Tibial artery (tissue), 4 donors: ENCODE measurements at regions of chr16 and their contacts with region 1.

Region 1: GRCh38 chr16:1194665-1195392 is 30.2 kb downstream of the TPSG1 start:
- DNase-seq: no peak
- H3K4me3 ChIP-seq: no peak overlapping the region
- H3K27ac ChIP-seq: peak overlapping the region in 1 of 2 donors; percentile 18
- H3K4me1 ChIP-seq: peaks cover 0 to 39% (median 29%) of the 10 kb centered on the region in 4 donors
- H3K27me3 ChIP-seq: no peaks in the 10 kb centered on the region
- CTCF ChIP-seq: peak; percentile 83 to 86

Region 2: DNA sequence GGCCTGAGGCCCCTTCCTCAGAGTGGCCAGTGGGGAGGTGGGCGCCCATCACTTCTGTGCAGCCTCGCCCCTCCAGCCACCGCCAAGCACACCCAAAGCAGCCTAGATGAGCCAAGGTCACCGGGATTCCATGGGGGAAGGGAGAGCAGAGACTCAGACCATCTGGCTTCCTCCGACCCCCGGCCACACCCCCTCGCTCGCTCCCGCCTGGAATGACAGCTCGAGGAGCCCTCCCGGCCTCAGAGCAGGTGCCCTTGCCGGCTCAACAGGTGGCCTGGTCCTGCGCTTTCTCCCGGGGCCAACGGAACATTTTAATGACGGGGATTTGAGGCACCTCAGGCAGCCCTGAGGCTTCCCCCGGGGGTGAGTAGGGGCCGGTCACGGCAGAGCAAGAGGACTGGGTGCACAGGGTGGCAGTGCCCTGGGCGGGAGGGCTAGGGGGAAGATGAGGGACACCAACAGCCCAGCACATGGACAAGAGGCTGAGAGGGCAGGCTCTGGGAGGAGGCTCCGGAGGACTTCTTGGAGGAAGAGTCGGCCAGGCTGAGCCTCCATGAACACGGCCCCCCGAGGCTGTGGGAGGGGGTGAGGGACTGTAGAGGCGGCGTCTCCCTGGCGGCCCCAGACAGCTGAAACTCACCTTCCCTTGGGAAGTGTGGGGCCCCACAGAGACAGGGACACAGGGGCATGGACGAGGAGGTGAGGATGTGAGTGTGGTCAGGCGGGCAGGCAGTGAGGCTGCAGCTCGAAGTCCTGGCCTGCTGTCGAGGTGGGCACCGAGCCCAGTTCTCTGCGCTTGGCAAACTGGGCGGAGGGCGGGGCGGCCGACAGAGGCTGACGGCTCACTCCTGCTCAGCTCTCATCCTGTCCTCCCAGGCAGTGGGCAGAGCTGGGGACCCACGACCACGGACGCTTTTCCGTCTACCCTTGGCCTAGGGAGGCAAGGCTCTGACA is 86.3 kb before region 1 on chr16:
- intact Hi-C with region 1: loop called (anchors 2 kb)
- DNase-seq: peak; percentile 57 to 90
- H3K4me3 ChIP-seq: no peak overlapping the region
- H3K27ac ChIP-seq: no peak overlapping the region
- H3K4me1 ChIP-seq: peaks cover 0 to 24% (median 13%) of the 10 kb centered on the region in 4 donors
- H3K27me3 ChIP-seq: peaks cover 0 to 57% of the 10 kb centered on the region in 2 donors
- CTCF ChIP-seq: no peak

Region 3: GRCh38 chr16:1152651-1153259 is 42.1 kb before region 1 on chr16 and contains the start of gene CACNA1H:
- intact Hi-C with region 1: loop called (anchors 5 kb)
- DNase-seq: no peak
- H3K4me3 ChIP-seq: peak within 1 kb of the TSS; percentile 71 to 85
- H3K27ac ChIP-seq: peak within 1 kb of the TSS; percentile 86 to 94
- H3K4me1 ChIP-seq: peaks cover 0 to 55% (median 30%) of the 10 kb centered on the region in 4 donors
- H3K27me3 ChIP-seq: peaks cover 0 to 17% of the 10 kb centered on the region in 2 donors
- CTCF ChIP-seq: peak in 1 of 2 experiments; percentile 48